ENCODE measurements at regions of chr2 and their contacts with region 1.

Region 1: GRCh38 chr2:231052494-231053451 is 3.9 kb upstream of the PSMD1 start:
- DNase-seq: peak; percentile 85
- ATAC-seq: peak; percentile 69 to 82

Region 2: DNA sequence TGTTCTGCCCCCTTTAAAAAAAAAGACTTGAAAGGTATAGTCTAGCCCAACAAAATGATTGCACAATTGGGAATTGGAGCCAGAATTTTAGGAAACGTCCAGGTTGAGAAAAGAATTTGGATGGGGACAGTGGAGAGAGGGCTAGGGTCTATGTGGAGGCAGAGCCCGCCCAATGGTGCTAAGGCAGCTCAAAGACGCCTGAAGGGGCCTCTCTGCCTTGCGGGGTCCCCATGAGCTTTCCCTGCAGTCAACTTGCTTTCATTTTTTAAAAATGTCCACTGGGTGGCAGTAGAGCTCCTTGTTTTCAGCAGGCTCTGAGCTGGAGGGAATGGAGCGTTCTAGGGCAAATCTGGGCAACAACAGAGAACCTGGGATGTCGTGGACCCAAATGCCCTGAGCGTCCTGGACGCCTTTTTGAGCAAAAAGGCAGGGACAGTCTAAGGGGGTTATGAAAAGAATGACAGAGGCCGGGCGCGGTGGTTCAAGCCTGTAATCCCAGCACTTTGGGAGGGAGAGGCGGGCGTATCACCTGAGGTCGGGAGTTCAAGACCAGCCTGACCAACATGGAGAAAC is 228.3 kb before region 1 on chr2:
- intact Hi-C with region 1: loop called in 1 of 2 experiments (anchors 5 kb)
- DNase-seq: peak; percentile 36
- ATAC-seq: peak; percentile 70 to 80